ENCODE measurements at regions of chr6 and their contacts with region 1.

Region 1: DNA sequence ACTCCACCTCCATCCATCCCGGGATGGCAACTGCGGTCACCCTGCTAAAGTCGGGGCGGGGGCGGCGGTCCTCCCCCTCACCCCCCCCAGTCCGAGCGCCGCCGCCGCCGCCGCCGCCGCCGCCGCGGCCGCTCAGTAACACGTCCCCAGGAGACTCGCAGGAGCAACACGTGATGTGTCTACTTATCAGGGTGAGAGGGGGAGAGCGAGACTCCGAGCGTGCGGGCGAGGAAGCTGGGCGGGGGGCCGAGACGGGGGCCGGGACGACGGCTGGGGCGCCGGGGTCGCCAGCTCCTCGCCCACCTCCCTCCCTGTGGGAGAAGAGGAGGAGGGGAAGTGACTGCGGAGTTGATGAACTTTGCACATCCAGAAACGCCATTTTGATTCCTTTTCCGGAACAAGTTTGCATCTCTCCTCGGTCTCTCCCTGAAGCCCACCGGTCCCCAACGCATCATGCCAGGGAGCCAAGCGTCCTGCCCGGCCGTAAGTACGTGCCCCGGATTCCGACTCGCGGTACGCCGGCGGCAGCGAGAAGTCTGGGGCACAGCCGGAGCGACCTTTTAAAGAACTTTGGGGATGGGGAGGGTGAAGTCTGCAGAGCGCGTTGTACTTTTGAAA is at the start of gene RREB1:
- DNase-seq: peak; percentile 60
- H3K4me3 Mint-ChIP-seq: peak within 1 kb of the TSS; percentile 90
- H3K27ac Mint-ChIP-seq: peak within 1 kb of the TSS; percentile 93
- H3K4me1 Mint-ChIP-seq: peaks cover 35% of the 10 kb centered on the region
- H3K27me3 Mint-ChIP-seq: no peaks in the 10 kb centered on the region
- total RNA-seq, gene RREB1: 10.8 to 12.2 TPM

Region 2: DNA sequence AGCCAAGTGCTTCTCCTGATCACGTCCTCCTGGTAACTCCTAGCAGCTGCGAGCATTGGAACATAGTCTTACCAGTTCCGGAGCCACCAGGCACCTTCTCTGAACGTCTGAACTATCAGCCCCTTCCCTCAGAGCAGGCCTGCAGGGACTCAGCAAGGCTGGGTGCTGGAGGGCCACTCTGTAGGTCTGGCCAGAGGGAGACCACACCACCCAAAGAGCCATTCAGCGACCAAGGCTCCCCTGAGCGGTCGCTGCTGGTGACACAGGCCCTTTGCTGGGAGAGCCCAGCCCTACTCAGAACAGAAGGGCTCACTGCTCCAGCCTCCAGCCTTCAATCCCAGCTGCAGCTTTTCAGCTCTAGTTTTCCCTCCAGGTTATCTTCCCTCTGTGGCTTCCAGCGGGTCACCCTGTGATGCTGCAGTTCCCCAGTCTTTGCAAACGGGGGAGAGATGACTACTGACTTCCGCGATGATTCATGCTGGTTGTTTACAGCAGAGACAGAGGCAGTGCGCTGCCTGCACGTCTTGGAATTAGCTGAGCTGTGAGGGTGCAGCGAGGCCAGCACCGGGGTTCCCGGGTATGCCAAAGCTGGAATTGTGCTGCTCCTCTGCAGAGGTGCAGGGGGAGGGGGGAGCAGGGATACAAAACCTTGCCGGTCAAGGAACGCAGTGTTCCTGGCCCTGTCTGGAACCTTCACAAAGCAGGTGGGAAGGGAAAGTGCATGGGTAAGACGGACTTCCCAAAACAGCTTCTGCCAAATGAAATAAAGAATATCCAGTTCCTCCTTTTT is 357.8 kb before region 1 on chr6:
- CTCF ChIA-PET with region 1: no interaction called
- intact Hi-C with region 1: loop called (anchors 2 kb)
- DNase-seq: peak; percentile 79
- H3K4me3 Mint-ChIP-seq: no peak overlapping the region
- H3K27ac Mint-ChIP-seq: no peak overlapping the region
- H3K4me1 Mint-ChIP-seq: peaks cover 23% of the 10 kb centered on the region
- H3K27me3 Mint-ChIP-seq: no peaks in the 10 kb centered on the region

Region 3: GRCh38 chr6:7051233-7052114 is 56.2 kb before region 1 on chr6:
- CTCF ChIA-PET with region 1: no interaction called
- intact Hi-C with region 1: loop called (anchors 2 kb)
- DNase-seq: peak; percentile 55
- H3K4me3 Mint-ChIP-seq: peak overlapping the region; percentile 62
- H3K27ac Mint-ChIP-seq: no peak overlapping the region
- H3K4me1 Mint-ChIP-seq: peaks cover 12% of the 10 kb centered on the region
- H3K27me3 Mint-ChIP-seq: peaks cover 11% of the 10 kb centered on the region

Region 4: GRCh38 chr6:7067305-7067704 is 40.4 kb before region 1 on chr6:
- CTCF ChIA-PET with region 1: no interaction called
- intact Hi-C with region 1: no loop called
- DNase-seq: no peak
- H3K4me3 Mint-ChIP-seq: no peak overlapping the region
- H3K27ac Mint-ChIP-seq: no peak overlapping the region
- H3K4me1 Mint-ChIP-seq: no peaks in the 10 kb centered on the region
- H3K27me3 Mint-ChIP-seq: peaks cover 3% of the 10 kb centered on the region

Region 5: DNA sequence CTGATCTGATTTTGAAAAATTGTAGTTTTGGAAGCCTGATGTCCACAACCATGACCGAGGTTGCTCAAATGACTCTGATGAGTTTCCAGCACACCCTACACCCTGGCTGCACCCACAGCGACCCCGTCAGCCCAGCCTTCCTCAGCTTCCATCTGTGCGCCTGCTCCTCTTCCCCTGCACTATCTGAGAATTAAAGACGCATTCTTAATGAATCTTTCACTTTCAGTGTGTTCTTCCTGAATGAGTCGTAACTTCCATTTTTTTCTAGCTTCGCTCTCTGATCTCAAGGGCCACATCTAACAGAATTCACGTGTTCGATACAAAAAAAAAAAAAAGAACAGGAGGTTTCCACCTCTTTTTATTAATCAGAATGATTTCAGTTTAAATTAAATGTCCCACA is 21.2 kb before region 1 on chr6:
- CTCF ChIA-PET with region 1: interaction called, 11 read pairs
- intact Hi-C with region 1: loop called (anchors 1 kb)
- DNase-seq: peak; percentile 65
- H3K4me3 Mint-ChIP-seq: peak overlapping the region; percentile 17
- H3K27ac Mint-ChIP-seq: no peak overlapping the region
- H3K4me1 Mint-ChIP-seq: peaks cover 29% of the 10 kb centered on the region
- H3K27me3 Mint-ChIP-seq: no peaks in the 10 kb centered on the region

Region 6: DNA sequence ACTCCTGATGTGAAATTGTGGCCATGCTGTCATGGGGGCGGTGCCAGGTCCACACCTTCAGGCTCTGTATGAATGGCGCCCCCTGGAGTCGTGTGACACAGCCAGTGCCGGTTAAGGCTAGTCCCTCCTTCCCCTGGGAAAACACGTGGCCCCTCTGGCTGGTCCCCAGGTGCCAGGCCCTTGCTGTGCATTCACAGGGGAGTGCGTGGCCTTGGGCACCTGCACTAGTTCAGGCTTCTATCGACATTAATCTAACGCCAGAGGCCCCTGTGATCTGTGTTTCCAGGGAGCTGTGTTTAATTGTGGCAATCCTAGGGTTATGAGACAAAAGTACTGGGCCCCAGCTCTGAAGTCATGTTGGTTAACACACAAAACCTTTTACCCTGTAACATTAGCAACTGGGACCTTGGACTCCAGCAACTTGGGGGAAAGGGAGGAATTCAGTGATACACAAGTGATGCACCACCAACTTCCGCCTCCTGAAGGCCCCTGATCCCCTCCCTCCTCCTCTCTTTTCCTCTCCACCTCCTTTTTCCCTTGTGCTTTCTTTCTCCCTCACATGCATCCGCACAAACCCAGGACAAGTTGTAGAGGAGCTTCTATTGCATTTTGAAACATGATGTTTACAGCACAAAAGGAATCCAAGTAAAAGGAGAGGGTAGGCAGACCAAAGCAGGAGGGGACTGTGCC is 131.4 kb after region 1 on chr6:
- CTCF ChIA-PET with region 1: interaction called, 4 read pairs
- intact Hi-C with region 1: loop called (anchors 2 kb)
- DNase-seq: peak; percentile 93
- H3K4me3 Mint-ChIP-seq: no peak overlapping the region
- H3K27ac Mint-ChIP-seq: peak overlapping the region; percentile 15
- H3K4me1 Mint-ChIP-seq: peaks cover 27% of the 10 kb centered on the region
- H3K27me3 Mint-ChIP-seq: no peaks in the 10 kb centered on the region

Region 7: GRCh38 chr6:7292596-7293255 is 185.0 kb after region 1 on chr6:
- CTCF ChIA-PET with region 1: no interaction called
- intact Hi-C with region 1: no loop called
- DNase-seq: no peak
- H3K4me3 Mint-ChIP-seq: no peak overlapping the region
- H3K27ac Mint-ChIP-seq: no peak overlapping the region
- H3K4me1 Mint-ChIP-seq: peaks cover 9% of the 10 kb centered on the region
- H3K27me3 Mint-ChIP-seq: no peaks in the 10 kb centered on the region

Region 8: GRCh38 chr6:7389451-7390225 is 282.0 kb after region 1 on chr6 and contains the starts of genes CAGE1 and RIOK1:
- CTCF ChIA-PET with region 1: no interaction called
- intact Hi-C with region 1: loop called (anchors 2 kb)
- DNase-seq: peak; percentile 97
- H3K4me3 Mint-ChIP-seq: peak within 1 kb of the TSS; percentile 94
- H3K27ac Mint-ChIP-seq: peak within 1 kb of the TSS; percentile 97
- H3K4me1 Mint-ChIP-seq: peaks cover 40% of the 10 kb centered on the region
- H3K27me3 Mint-ChIP-seq: no peaks in the 10 kb centered on the region
- total RNA-seq, gene CAGE1: 0.25 to 0.26 TPM
- total RNA-seq, gene RIOK1: 33.8 to 38.5 TPM

Measured in activated naive CD4-positive, alpha-beta T cell treated with anti-CD3 and anti-CD28 coated beads for 36 hours (primary cell).